Calu3 (cell line): ENCODE measurements at regions of chr2 and their contacts with region 1.

Region 1: DNA sequence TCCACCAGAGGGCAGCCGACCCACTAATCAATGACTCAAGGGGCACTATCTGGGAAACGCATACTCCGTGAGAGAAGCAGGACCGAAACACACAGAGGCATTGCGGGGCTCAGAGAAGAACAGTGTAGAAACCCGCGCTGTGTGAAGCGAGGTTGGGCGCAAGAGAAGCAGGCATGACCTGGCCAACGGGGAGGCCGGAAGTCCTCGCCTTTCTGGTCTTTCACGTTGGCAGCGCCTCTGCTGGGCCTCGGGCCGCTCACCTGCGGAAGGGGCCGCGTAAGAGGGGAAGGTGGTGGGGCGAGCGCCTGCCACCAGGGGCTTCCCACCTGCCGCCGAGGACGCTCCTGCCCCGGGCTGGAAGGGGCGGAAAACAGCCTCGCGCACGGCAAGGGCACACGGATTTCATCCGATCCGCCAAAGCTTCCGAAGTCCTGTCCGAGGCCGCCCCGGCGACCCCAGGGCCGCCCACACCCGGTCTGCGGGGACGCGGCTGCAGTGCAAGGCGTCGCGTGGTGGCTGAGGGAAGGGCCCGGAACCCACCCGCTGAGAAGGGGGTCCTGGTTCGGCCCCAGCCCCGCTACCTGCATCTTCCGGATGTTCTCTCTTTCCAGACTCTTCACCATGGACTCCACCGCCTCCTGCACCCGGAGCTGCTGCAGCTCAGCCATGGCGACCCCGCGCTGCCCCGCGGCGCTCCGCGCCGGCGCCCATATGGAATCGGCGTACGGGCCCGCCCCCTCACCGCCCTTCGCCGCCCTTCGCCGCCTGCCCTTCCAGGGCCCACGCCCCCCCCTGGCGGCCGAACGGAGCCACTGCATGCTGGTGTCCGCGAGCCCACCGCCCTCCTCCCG is at the start of gene FAM136A:
- DNase-seq: peak; percentile 94
- H3K4me3 Mint-ChIP-seq: peak within 1 kb of the TSS; percentile 90
- H3K27ac Mint-ChIP-seq: peak within 1 kb of the TSS; percentile 94
- H3K4me1 Mint-ChIP-seq: peaks cover 10% of the 10 kb centered on the region
- H3K27me3 Mint-ChIP-seq: no peaks in the 10 kb centered on the region
- CTCF ChIP-seq: peak; percentile 76
- total RNA-seq, gene FAM136A: 53.7 and 60.4 TPM in 2 replicates

Region 2: GRCh38 chr2:69975500-69976462 is 325.8 kb before region 1 on chr2:
- CTCF ChIA-PET with region 1: no interaction called
- intact Hi-C with region 1: no loop called
- DNase-seq: no peak
- H3K4me3 Mint-ChIP-seq: no peak overlapping the region
- H3K27ac Mint-ChIP-seq: no peak overlapping the region
- H3K4me1 Mint-ChIP-seq: no peaks in the 10 kb centered on the region
- H3K27me3 Mint-ChIP-seq: peaks cover under 1% of the 10 kb centered on the region
- CTCF ChIP-seq: no peak

Region 3: GRCh38 chr2:70328921-70329561 is 27.5 kb after region 1 on chr2:
- CTCF ChIA-PET with region 1: interaction called, 32 read pairs
- intact Hi-C with region 1: no loop called
- DNase-seq: peak; percentile 91
- H3K4me3 Mint-ChIP-seq: peak overlapping the region; percentile 40
- H3K27ac Mint-ChIP-seq: peak overlapping the region; percentile 75
- H3K4me1 Mint-ChIP-seq: peaks cover 27% of the 10 kb centered on the region
- H3K27me3 Mint-ChIP-seq: no peaks in the 10 kb centered on the region
- CTCF ChIP-seq: no peak

Region 4: DNA sequence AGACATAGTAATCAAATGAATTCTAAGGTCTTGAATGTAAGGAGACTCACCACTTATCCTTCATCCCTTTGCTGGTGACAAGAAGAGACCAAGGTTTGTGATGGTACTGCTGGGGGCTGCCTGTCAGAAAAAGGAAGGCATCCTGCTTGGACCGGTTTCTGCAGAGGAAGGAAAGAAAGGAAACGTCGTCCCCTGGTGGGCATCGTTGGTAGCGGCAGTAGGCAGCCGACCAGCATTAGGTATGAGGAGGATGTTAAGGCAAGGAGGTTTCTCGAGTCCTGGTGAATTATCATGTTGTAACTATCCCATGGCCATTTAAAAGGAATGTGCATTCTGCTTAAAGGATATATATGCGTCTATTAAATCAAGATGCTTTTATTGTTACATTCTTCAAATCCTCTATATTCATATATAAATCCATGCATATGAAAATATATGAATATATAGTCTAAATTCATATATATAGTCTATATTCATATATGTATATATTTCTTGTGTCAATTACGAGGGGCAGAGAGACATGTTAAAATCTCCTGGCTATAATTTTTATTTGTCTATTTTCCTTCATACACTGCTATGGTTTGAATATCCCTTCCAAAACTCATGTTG is 346.4 kb after region 1 on chr2:
- CTCF ChIA-PET with region 1: interaction called, 12 read pairs
- intact Hi-C with region 1: loop called (anchors 1 kb)
- DNase-seq: peak; percentile 86
- H3K4me3 Mint-ChIP-seq: no peak overlapping the region
- H3K27ac Mint-ChIP-seq: no peak overlapping the region
- H3K4me1 Mint-ChIP-seq: no peaks in the 10 kb centered on the region
- H3K27me3 Mint-ChIP-seq: peaks cover 37% of the 10 kb centered on the region
- CTCF ChIP-seq: peak; percentile 94